Heart right ventricle (tissue), 16 donors: ENCODE measurements at regions of chr2 and their contacts with region 1.

Region 1: DNA sequence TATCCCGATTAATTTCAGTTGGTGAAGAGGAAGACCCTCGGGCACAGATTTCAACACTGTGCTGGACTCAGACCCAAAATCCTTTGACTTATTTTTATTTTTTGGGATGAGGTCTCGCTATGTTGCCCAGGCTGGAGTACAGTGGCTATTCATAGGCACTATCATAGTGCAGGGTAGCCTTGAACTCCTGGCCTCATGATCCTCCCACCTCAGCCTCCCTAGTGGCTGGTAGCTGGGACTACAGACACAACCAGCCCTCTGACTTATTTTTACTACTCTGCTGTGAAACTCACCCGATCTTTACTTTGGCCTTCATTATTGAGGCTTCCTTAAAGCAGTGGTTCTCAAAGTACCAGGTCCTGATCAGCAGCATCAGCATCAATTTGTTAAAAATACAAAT is 18.2 kb upstream of the ADAM17 start:
- DNase-seq: no peak
- ATAC-seq: no peak
- H3K4me3 ChIP-seq: no peak overlapping the region
- H3K27ac ChIP-seq: peak overlapping the region in 9 of 10 donors; percentile 7 to 79 (median 58)
- H3K4me1 ChIP-seq: peaks cover 0 to 51% (median 27%) of the 10 kb centered on the region in 9 donors
- H3K27me3 ChIP-seq: no peaks in the 10 kb centered on the region
- CTCF ChIP-seq: no peak

Region 2: DNA sequence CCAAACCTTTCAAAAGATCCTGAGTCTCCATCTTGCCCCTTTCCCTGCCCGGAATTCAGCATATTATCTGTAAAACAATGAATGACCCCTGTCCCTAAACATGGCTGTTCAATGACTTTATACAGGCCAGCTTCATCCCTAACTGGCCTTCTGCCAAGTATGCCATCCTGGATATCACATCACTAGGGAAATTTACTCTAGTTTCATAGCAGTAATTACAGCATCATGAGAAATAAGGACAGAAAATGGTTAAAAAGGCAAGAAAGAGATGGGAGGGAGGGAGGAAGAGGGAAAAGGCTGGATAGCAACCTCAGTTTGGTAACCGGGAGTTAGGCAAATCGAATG is 574.8 kb before region 1 on chr2:
- intact Hi-C with region 1: no loop called
- DNase-seq: no peak
- ATAC-seq: no peak
- H3K4me3 ChIP-seq: no peak overlapping the region
- H3K27ac ChIP-seq: no peak overlapping the region
- H3K4me1 ChIP-seq: peaks cover 0 to 35% (median 8%) of the 10 kb centered on the region in 9 donors
- H3K27me3 ChIP-seq: no peaks in the 10 kb centered on the region
- CTCF ChIP-seq: no peak

Region 3: GRCh38 chr2:9618410-9618809 is 44.6 kb after region 1 on chr2:
- intact Hi-C with region 1: loop called in 2 of 10 experiments (anchors 5 to 10 kb)
- DNase-seq: no peak
- ATAC-seq: peak in 1 of 8 donors; percentile 22
- H3K4me3 ChIP-seq: no peak overlapping the region
- H3K27ac ChIP-seq: peak overlapping the region in 1 of 10 donors; percentile 22
- H3K4me1 ChIP-seq: peaks cover 5 to 90% (median 73%) of the 10 kb centered on the region in 9 donors
- H3K27me3 ChIP-seq: no peaks in the 10 kb centered on the region
- CTCF ChIP-seq: no peak

Region 4: GRCh38 chr2:9847140-9847539 is 273.3 kb after region 1 on chr2:
- intact Hi-C with region 1: no loop called
- DNase-seq: no peak
- ATAC-seq: no peak
- H3K4me3 ChIP-seq: no peak overlapping the region
- H3K27ac ChIP-seq: no peak overlapping the region
- H3K4me1 ChIP-seq: peaks cover 0 to 30% (median 15%) of the 10 kb centered on the region in 9 donors
- H3K27me3 ChIP-seq: no peaks in the 10 kb centered on the region
- CTCF ChIP-seq: no peak